ENCODE measurements at regions of chr2 and their contacts with region 1.

Region 1: DNA sequence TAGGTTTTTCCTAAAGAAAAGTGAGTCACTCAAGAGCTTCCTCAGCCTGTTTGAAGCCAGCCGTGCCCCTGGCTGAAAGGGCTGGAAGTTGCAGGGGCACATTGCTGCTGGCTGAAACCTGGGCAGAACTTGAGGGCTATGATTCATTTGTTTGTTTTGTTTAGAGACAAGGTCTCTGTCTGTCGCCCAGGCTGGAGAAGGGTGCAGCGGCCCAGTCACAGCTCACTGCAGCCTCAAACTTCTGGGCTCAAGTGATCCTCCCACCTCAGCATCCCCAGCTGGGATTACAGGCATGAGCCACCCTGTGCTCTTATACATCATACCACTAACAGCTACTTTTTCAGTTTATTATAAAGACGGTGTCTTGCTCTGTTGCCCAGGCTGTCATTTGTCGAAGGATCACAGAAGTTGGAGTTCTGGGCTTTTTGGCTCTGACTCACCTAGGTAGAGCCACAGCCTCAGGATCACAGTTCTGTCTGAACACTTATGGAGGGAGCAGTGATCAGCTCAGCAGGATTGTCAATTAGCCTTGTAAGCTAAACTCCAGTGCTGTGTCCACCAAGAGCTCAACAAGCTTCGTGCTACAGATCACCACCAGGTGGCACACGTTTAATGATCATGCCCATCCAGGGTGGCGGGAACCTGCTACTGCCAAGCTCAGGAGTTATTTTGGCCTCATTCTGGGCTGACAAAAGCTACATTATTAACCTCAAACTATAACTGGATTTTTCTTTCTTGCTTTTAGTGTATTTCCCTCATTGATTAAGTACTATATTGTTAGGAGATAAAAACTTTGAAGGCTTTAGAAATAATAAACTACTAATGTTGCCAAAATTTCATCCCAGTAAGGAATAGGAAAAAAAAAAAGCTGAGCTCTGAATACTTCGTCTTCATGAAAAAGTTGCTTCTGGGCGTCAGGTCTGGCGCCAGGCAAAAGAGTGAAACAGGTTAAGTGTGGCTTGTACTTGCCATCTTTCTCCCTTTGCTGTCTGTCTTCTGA is 57.9 kb downstream of the ARHGEF33 start:
- DNase-seq: peak; percentile 82
- ATAC-seq: peak; percentile 92
- H3K4me3 Mint-ChIP-seq: no peak overlapping the region
- H3K27ac Mint-ChIP-seq: no peak overlapping the region
- H3K4me1 Mint-ChIP-seq: peaks cover 31% of the 10 kb centered on the region
- H3K27me3 Mint-ChIP-seq: peaks cover 2% of the 10 kb centered on the region; the same call in 1 of the 2 replicates
- CTCF ChIP-seq: peak; percentile 53

Region 2: DNA sequence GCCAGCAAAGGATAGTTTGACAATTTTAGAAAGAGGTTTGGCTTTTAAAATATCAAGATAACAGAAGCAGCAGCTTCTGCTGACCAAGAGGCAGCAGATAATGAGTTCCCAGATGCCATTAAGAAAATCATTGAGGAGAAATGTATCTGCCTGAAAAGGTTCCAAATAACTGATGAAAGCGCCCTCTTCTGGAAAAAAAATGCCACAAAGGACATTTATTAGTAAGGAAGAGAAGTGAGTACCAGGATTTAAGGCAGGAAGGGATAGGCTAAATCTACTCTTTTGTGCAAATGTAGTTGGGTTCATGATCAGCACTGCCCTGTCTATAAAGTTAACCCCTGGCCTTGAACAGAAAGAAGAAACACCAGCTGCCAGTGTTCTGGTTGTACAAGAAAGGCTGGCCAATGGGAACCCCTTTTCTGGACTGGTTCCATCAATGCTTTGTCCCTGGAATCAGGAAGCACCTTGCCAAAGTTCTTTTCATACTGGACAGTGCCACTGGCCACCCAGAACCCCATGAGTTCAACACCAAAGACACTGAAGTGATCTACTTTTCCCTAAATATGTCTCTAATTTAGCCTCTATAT is 112.4 kb before region 1 on chr2:
- CTCF ChIA-PET with region 1: no interaction called
- POLR2A ChIA-PET with region 1: no interaction called
- DNase-seq: no peak
- ATAC-seq: no peak; the same call in none of the 2 replicates
- H3K4me3 Mint-ChIP-seq: no peak overlapping the region
- H3K27ac Mint-ChIP-seq: no peak overlapping the region
- H3K4me1 Mint-ChIP-seq: no peaks in the 10 kb centered on the region
- H3K27me3 Mint-ChIP-seq: no peaks in the 10 kb centered on the region
- CTCF ChIP-seq: no peak

Region 3: DNA sequence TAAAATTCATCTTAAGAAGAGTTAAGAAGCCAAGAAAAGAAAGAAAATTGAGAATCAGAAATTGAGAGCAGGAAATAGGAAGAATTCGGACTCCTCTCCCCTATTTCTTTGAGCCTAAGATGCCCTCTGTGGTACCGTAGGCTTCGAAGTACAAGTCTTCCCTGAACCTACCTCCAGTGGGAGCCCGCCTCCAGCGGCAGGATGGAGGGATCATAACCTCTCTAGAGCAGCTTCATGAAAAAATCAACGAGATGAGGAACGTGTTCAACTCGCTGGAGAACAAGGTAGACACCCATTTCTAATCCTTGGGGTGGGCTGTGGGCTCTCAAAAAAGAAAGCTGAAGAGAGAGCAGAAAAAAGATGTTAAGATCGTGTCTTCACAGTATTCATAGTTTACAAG is 21.6 kb before region 1 on chr2:
- CTCF ChIA-PET with region 1: interaction called, 24 read pairs
- POLR2A ChIA-PET with region 1: no interaction called
- DNase-seq: peak; percentile 47
- ATAC-seq: peak; percentile 99
- H3K4me3 Mint-ChIP-seq: no peak overlapping the region
- H3K27ac Mint-ChIP-seq: no peak overlapping the region
- H3K4me1 Mint-ChIP-seq: peaks cover 8% of the 10 kb centered on the region
- H3K27me3 Mint-ChIP-seq: no peaks in the 10 kb centered on the region
- CTCF ChIP-seq: no peak

Region 4: GRCh38 chr2:38966678-38967077 is 19.1 kb after region 1 on chr2:
- CTCF ChIA-PET with region 1: interaction called, 44 read pairs
- POLR2A ChIA-PET with region 1: no interaction called
- DNase-seq: no peak
- ATAC-seq: peak; percentile 79
- H3K4me3 Mint-ChIP-seq: no peak overlapping the region
- H3K27ac Mint-ChIP-seq: no peak overlapping the region
- H3K4me1 Mint-ChIP-seq: peaks cover 13% of the 10 kb centered on the region
- H3K27me3 Mint-ChIP-seq: peaks cover 8% of the 10 kb centered on the region
- CTCF ChIP-seq: no peak

Region 5: GRCh38 chr2:39008665-39009064 is 61.1 kb after region 1 on chr2:
- CTCF ChIA-PET with region 1: interaction called, 15 read pairs
- POLR2A ChIA-PET with region 1: no interaction called
- DNase-seq: no peak
- ATAC-seq: no peak
- H3K4me3 Mint-ChIP-seq: no peak overlapping the region
- H3K27ac Mint-ChIP-seq: peak overlapping the region; percentile 73
- H3K4me1 Mint-ChIP-seq: peaks cover 22% of the 10 kb centered on the region
- H3K27me3 Mint-ChIP-seq: no peaks in the 10 kb centered on the region
- CTCF ChIP-seq: no peak

Region 6: GRCh38 chr2:39059366-39059952 is 111.9 kb after region 1 on chr2:
- CTCF ChIA-PET with region 1: interaction called, 17 read pairs
- POLR2A ChIA-PET with region 1: no interaction called
- DNase-seq: no peak
- ATAC-seq: no peak
- H3K4me3 Mint-ChIP-seq: no peak overlapping the region
- H3K27ac Mint-ChIP-seq: 0 out of 2 replicates have a peak overlapping the region, but pooled peaks have one; percentile 57
- H3K4me1 Mint-ChIP-seq: peaks cover 27% of the 10 kb centered on the region
- H3K27me3 Mint-ChIP-seq: no peaks in the 10 kb centered on the region
- CTCF ChIP-seq: peak; percentile 36; the same call in 1 of the 2 replicates